ENCODE measurements at regions of chr1 and their contacts with region 1.

Region 1: GRCh38 chr1:151210830-151211229 is 12.5 kb downstream of the PIP5K1A start:
- DNase-seq: peak; percentile 72
- ATAC-seq: peak; percentile 86
- H3K4me3 ChIP-seq: no peak overlapping the region
- H3K27ac ChIP-seq: 0 out of 2 replicates have a peak overlapping the region, but pooled peaks have one; percentile 4
- H3K4me1 ChIP-seq: peaks cover 1% of the 10 kb centered on the region; the same call in 1 of the 2 replicates
- H3K27me3 ChIP-seq: no peaks in the 10 kb centered on the region
- CTCF ChIP-seq: no peak
- POLR2A ChIP-seq: no peak
- RAD21 ChIP-seq: no peak

Region 2: GRCh38 chr1:152029144-152029928 is 818.5 kb after region 1 on chr1:
- CTCF ChIA-PET with region 1: no interaction called
- POLR2A ChIA-PET with region 1: interaction called, 10 read pairs
- dilution Hi-C with region 1: no loop called
- in situ Hi-C with region 1: no loop called
- intact Hi-C with region 1: no loop called
- DNase-seq: peak; percentile 43
- ATAC-seq: peak; percentile 58
- H3K4me3 ChIP-seq: no peak overlapping the region
- H3K27ac ChIP-seq: no peak overlapping the region
- H3K4me1 ChIP-seq: peaks cover 14% of the 10 kb centered on the region
- H3K27me3 ChIP-seq: peaks cover 6% of the 10 kb centered on the region
- CTCF ChIP-seq: no peak
- POLR2A ChIP-seq: no peak
- RAD21 ChIP-seq: no peak